PC-9 (cell line): ENCODE measurements at regions of chr20 and their contacts with region 1.

Region 1: GRCh38 chr20:34876162-34877001 is at the start of gene ACSS2:
- DNase-seq: peak in 1 of 2 experiments; percentile 100
- H3K4me3 ChIP-seq: peak within 1 kb of the TSS; percentile 91
- H3K27ac ChIP-seq: peak within 1 kb of the TSS; percentile 83
- H3K4me1 ChIP-seq: peaks cover 40% of the 10 kb centered on the region
- H3K27me3 ChIP-seq: no peaks in the 10 kb centered on the region
- CTCF ChIP-seq: no peak
- total RNA-seq, gene ACSS2: 81.1 and 108 TPM in 2 replicates

Region 2: DNA sequence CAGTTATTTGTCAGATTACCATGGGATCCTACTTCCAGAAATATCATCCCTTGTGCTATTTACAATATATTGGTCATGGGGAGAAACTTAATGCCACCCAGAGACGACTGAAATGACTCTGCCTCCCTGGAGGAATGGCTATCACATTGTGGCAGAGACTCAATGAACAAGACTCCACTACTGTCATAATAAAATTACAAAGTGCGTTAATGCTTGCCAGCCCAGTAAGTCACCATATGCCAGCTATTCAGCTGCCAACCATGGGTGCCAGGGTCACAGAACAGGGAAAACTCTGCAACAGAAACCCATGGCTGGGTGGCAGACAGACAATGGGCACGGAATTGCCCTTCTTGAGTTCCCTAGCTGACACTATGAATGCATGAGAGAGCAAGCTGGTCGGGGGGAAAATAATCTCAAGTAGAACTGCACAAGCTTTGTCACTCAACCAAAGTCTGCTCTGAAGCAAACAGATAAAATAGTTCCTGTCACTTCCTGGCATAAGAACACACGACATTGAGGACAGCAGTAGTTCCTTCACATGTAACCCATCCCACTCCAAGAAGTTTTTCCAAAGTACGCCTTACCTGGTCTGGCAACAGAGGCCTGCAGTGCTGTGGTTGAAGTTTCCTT is 140.2 kb before region 1 on chr20:
- CTCF ChIA-PET with region 1: no interaction called
- POLR2A ChIA-PET with region 1: no interaction called
- intact Hi-C with region 1: no loop called
- DNase-seq: no peak
- H3K4me3 ChIP-seq: no peak overlapping the region
- H3K27ac ChIP-seq: no peak overlapping the region
- H3K4me1 ChIP-seq: no peaks in the 10 kb centered on the region
- H3K27me3 ChIP-seq: no peaks in the 10 kb centered on the region
- CTCF ChIP-seq: no peak

Region 3: GRCh38 chr20:34907616-34908469 is 31.5 kb after region 1 on chr20:
- CTCF ChIA-PET with region 1: no interaction called
- POLR2A ChIA-PET with region 1: no interaction called
- intact Hi-C with region 1: loop called (anchors 1 kb)
- DNase-seq: peak; percentile 86 to 97
- H3K4me3 ChIP-seq: 0 out of 2 replicates have a peak overlapping the region, but pooled peaks have one; percentile 3
- H3K27ac ChIP-seq: peak overlapping the region; percentile 90
- H3K4me1 ChIP-seq: peaks cover 40% of the 10 kb centered on the region
- H3K27me3 ChIP-seq: no peaks in the 10 kb centered on the region
- CTCF ChIP-seq: no peak

Region 4: GRCh38 chr20:34943808-34944568 is 67.6 kb after region 1 on chr20:
- CTCF ChIA-PET with region 1: interaction called, 3 read pairs
- POLR2A ChIA-PET with region 1: interaction called, 11 read pairs
- intact Hi-C with region 1: loop called (anchors 5 kb)
- DNase-seq: peak; percentile 67 to 87
- H3K4me3 ChIP-seq: no peak overlapping the region; the same call in 1 of the 2 replicates
- H3K27ac ChIP-seq: peak overlapping the region; percentile 97
- H3K4me1 ChIP-seq: peaks cover 63% of the 10 kb centered on the region
- H3K27me3 ChIP-seq: no peaks in the 10 kb centered on the region
- CTCF ChIP-seq: no peak

Region 5: GRCh38 chr20:35092524-35093266 is 216.3 kb after region 1 on chr20 and contains the start of gene TRPC4AP:
- CTCF ChIA-PET with region 1: interaction called, 8 read pairs
- POLR2A ChIA-PET with region 1: interaction called, 7 read pairs
- intact Hi-C with region 1: loop called (anchors 1 kb)
- DNase-seq: peak; percentile 82 to 93
- H3K4me3 ChIP-seq: peak within 1 kb of the TSS; percentile 92
- H3K27ac ChIP-seq: peak within 1 kb of the TSS; percentile 98
- H3K4me1 ChIP-seq: peaks cover 36% of the 10 kb centered on the region
- H3K27me3 ChIP-seq: no peaks in the 10 kb centered on the region
- CTCF ChIP-seq: peak; percentile 94
- total RNA-seq, gene TRPC4AP: 51.0 and 51.9 TPM in 2 replicates

Region 6: GRCh38 chr20:35207950-35208611 is 331.7 kb after region 1 on chr20:
- CTCF ChIA-PET with region 1: interaction called, 3 read pairs
- POLR2A ChIA-PET with region 1: no interaction called
- intact Hi-C with region 1: loop called (anchors 1 kb)
- DNase-seq: peak; percentile 56 to 73
- H3K4me3 ChIP-seq: no peak overlapping the region
- H3K27ac ChIP-seq: no peak overlapping the region
- H3K4me1 ChIP-seq: no peaks in the 10 kb centered on the region
- H3K27me3 ChIP-seq: no peaks in the 10 kb centered on the region
- CTCF ChIP-seq: peak; percentile 85